ENCODE measurements at regions of chr10 and their contacts with region 1.

Region 1: DNA sequence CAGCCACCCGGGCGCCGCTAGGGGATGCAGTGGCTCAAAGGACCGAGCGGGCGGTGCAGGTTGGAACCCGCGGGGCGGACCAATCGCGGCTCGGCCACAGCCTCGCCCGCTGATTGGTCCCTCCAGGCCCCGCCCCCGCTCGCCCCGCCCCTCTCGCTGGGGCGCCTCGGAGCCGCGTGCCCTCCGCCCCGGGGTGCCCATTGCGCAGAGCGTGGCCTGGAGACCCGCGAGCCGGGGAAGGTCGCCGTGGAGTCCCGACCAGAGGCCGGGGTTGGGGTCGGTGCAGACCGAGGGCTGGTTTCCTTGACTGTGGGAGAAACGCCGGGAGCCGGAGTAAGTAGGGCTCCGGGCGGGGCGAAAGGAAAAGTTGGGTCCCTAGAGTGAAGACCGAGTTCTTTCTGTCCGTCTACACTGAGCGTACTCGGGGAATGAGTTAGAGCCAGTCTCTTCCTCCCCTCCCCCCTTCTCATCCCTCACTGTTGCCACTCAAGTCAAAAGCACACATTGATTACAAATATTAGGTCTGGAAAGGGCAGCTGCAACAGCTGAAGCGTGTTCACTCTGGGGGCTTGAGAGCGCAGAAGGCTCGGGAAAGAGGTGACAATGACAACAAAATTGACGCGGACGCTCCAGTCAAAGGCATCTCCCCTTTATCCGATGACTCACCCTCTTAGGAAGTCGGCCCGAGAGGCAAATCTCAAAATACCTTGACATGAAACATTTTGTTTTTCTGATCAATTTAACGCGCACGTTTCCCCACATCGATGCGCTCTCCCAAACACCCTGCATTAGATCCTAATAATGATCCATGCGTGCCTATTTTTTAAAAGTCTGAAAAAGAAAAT is 820 bp upstream of the GATA3 start:
- DNase-seq: peak; percentile 80 to 98 (median 94)
- ATAC-seq: peak; percentile 59
- H3K4me3 ChIP-seq: peak overlapping the region; percentile 96
- H3K4me3 Mint-ChIP-seq: peak overlapping the region; percentile 95
- H3K27ac ChIP-seq: peak overlapping the region; percentile 61 to 76
- H3K27ac Mint-ChIP-seq: peak overlapping the region; percentile 97
- H3K4me1 ChIP-seq: peaks cover 67% of the 10 kb centered on the region
- H3K4me1 Mint-ChIP-seq: peaks cover 52% of the 10 kb centered on the region
- H3K27me3 ChIP-seq: peaks cover 37 to 44% of the 10 kb centered on the region in 2 experiments
- H3K27me3 Mint-ChIP-seq: peaks cover 38% of the 10 kb centered on the region
- CTCF ChIP-seq: peak; percentile 96

Region 2: GRCh38 chr10:7410862-7411670 is 642.6 kb before region 1 on chr10 and contains the start of gene SFMBT2:
- CTCF ChIA-PET with region 1: no interaction called
- POLR2A ChIA-PET with region 1: interaction called, 3 read pairs
- intact Hi-C with region 1: loop called in 1 of 2 experiments (anchors 10 kb)
- DNase-seq: peak; percentile 28 to 87 (median 62)
- ATAC-seq: peak; percentile 37
- H3K4me3 ChIP-seq: peak within 1 kb of the TSS; percentile 84
- H3K4me3 Mint-ChIP-seq: peak within 1 kb of the TSS; percentile 97
- H3K27ac ChIP-seq: peak within 1 kb of the TSS in 1 of 2 donors; percentile 61
- H3K27ac Mint-ChIP-seq: peak within 1 kb of the TSS; percentile 94
- H3K4me1 ChIP-seq: peaks cover 44% of the 10 kb centered on the region
- H3K4me1 Mint-ChIP-seq: peaks cover 51% of the 10 kb centered on the region
- H3K27me3 ChIP-seq: peaks cover 0 to 7% of the 10 kb centered on the region in 2 experiments
- H3K27me3 Mint-ChIP-seq: peaks cover 5% of the 10 kb centered on the region
- CTCF ChIP-seq: no peak
- total RNA-seq, gene SFMBT2: 41.0 to 42.0 TPM

Region 3: DNA sequence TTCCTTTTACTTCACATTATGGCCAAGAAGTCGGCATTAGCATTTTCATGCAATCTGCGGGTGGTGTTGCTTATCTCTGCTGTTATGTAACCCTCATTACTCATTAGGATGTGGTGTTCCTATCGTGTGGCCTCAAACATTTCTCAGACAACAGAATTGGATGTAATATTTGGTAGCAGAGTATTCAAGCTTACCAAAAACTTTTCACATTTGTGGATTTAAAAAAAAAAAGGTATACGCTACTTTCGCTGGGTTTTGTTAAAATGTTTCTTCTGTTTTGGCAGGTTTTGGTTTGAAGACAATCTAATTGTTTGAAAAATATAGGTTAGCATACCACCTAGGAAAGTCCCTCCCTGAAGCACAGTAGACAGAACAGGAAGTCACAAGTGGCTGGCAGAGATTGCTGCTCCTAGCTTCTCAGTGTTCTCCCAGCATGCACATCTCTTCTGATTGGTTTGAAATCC is 129.6 kb after region 1 on chr10:
- CTCF ChIA-PET with region 1: interaction called, 3 read pairs
- POLR2A ChIA-PET with region 1: interaction called, 3 read pairs
- intact Hi-C with region 1: loop called (anchors 5 kb)
- DNase-seq: peak in 12 of 14 experiments; percentile 8 to 90 (median 26)
- ATAC-seq: peak; percentile 92
- H3K4me3 ChIP-seq: peak overlapping the region; percentile 6
- H3K4me3 Mint-ChIP-seq: peak overlapping the region; percentile 72
- H3K27ac ChIP-seq: peak overlapping the region; percentile 29 to 78
- H3K27ac Mint-ChIP-seq: peak overlapping the region; percentile 94
- H3K4me1 ChIP-seq: peaks cover 23% of the 10 kb centered on the region
- H3K4me1 Mint-ChIP-seq: peaks cover 48% of the 10 kb centered on the region
- H3K27me3 ChIP-seq: no peaks in the 10 kb centered on the region
- H3K27me3 Mint-ChIP-seq: no peaks in the 10 kb centered on the region
- CTCF ChIP-seq: no peak

Region 4: DNA sequence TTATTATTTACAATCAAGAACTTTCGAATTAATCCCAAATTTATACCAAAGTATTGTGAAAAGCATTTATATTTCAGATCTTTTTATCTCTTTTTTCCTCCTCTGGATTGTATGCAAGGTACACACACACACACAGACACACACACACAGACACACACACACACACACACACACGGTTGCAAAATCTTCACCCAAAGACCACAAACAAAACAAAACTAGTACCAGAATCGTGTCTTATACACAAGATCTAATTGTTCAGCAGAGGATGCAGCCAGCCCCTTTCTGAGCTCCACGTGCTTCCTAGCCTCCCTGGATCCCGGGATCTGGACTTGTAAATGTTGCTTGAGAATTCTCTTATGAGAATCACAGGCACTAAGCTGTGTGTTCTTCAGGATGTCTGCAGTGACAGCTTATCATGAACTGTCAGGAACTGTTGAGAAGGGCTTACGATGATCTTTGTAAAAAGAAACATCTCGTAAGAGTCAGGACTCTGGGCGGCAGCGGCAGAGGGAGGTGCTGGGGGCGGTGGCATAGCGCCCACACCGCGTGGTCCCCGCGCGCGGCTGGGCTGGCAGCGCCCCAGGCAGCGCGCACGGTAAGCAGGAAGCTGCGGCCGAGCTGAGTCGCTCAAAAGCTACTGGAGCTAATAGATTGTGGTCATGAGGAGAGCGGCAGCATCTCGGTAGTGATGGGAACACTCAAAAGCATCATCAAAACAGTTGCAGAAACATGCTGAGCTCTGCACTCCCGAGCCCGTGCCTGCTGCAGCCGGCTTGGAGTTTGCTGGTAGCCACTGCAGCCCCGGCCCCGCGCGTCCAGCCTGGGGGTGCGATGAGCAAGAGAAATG is 278.4 kb after region 1 on chr10:
- CTCF ChIA-PET with region 1: interaction called, 3 read pairs
- POLR2A ChIA-PET with region 1: interaction called, 64 read pairs
- intact Hi-C with region 1: no loop called
- DNase-seq: peak; percentile 80 to 98 (median 88)
- ATAC-seq: peak; percentile 90
- H3K4me3 ChIP-seq: peak overlapping the region; percentile 61
- H3K4me3 Mint-ChIP-seq: peak overlapping the region; percentile 68
- H3K27ac ChIP-seq: peak overlapping the region; percentile 84 to 89
- H3K27ac Mint-ChIP-seq: peak overlapping the region; percentile 86
- H3K4me1 ChIP-seq: peaks cover 23% of the 10 kb centered on the region
- H3K4me1 Mint-ChIP-seq: peaks cover 44% of the 10 kb centered on the region
- H3K27me3 ChIP-seq: no peaks in the 10 kb centered on the region
- H3K27me3 Mint-ChIP-seq: no peaks in the 10 kb centered on the region
- CTCF ChIP-seq: no peak

Region 5: GRCh38 chr10:8473205-8473604 is 419.5 kb after region 1 on chr10:
- CTCF ChIA-PET with region 1: interaction called, 3 read pairs
- POLR2A ChIA-PET with region 1: interaction called, 5 read pairs
- intact Hi-C with region 1: loop called (anchors 2 to 5 kb)
- DNase-seq: peak in 5 of 14 experiments; percentile 17 to 78 (median 68)
- ATAC-seq: peak; percentile 83
- H3K4me3 ChIP-seq: no peak overlapping the region
- H3K4me3 Mint-ChIP-seq: no peak overlapping the region
- H3K27ac ChIP-seq: no peak overlapping the region
- H3K27ac Mint-ChIP-seq: no peak overlapping the region
- H3K4me1 ChIP-seq: no peaks in the 10 kb centered on the region
- H3K4me1 Mint-ChIP-seq: no peaks in the 10 kb centered on the region
- H3K27me3 ChIP-seq: no peaks in the 10 kb centered on the region
- H3K27me3 Mint-ChIP-seq: peaks cover 28% of the 10 kb centered on the region
- CTCF ChIP-seq: peak; percentile 43

Region 6: GRCh38 chr10:9097206-9097985 is 1043.7 kb after region 1 on chr10:
- CTCF ChIA-PET with region 1: no interaction called
- POLR2A ChIA-PET with region 1: interaction called, 3 read pairs
- intact Hi-C with region 1: loop called (anchors 5 kb)
- DNase-seq: peak in 3 of 14 experiments; percentile 58 to 81 (median 70)
- ATAC-seq: peak; percentile 62
- H3K4me3 ChIP-seq: no peak overlapping the region
- H3K4me3 Mint-ChIP-seq: peak overlapping the region; percentile 72
- H3K27ac ChIP-seq: no peak overlapping the region
- H3K27ac Mint-ChIP-seq: peak overlapping the region; percentile 88
- H3K4me1 ChIP-seq: peaks cover 17% of the 10 kb centered on the region
- H3K4me1 Mint-ChIP-seq: peaks cover 43% of the 10 kb centered on the region
- H3K27me3 ChIP-seq: no peaks in the 10 kb centered on the region
- H3K27me3 Mint-ChIP-seq: no peaks in the 10 kb centered on the region
- CTCF ChIP-seq: no peak

Measured in CD4-positive, alpha-beta T cell (primary cell).